ENCODE measurements at regions of chr12 and their contacts with region 1.

Region 1: DNA sequence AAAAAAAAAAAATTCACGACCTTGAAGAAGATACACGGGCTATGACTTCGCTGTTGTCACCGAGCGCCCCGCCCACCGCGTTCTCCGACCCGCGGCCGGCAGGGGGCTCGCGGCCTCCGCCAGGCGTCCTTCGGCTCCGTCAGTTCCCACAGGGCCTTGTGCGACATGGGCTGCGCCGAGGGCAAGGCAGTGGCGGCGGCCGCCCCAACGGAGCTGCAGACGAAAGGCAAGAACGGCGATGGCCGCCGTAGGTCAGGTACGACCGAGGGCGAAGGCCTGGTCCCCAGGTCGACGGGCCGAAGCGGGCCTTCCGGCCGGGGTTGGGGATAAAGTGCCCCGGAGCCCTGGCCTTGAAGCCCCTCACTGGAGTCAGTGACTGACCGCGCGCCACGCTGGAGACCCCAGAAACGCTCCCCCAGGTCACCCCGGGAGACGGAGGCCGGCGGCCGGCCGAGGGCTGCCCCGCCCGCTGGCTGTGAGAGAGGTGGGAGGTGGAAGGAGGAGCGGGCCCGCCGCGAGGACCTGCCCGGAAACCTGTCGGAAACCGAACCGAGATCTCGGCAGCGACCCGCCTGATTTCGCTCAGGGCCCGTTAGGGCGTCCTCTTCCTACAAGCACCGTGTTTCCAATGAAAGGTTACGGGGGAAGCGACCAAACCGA is at the start of gene TXNRD1:
- DNase-seq: peak; percentile 91 to 95
- ATAC-seq: peak; percentile 93
- H3K4me3 ChIP-seq: peak within 1 kb of the TSS; percentile 52 to 65
- H3K27ac ChIP-seq: peak within 1 kb of the TSS; percentile 34 to 79
- H3K4me1 ChIP-seq: no peaks in the 10 kb centered on the region
- H3K27me3 ChIP-seq: no peaks in the 10 kb centered on the region
- total RNA-seq, gene TXNRD1: 115 to 140 TPM

Region 2: DNA sequence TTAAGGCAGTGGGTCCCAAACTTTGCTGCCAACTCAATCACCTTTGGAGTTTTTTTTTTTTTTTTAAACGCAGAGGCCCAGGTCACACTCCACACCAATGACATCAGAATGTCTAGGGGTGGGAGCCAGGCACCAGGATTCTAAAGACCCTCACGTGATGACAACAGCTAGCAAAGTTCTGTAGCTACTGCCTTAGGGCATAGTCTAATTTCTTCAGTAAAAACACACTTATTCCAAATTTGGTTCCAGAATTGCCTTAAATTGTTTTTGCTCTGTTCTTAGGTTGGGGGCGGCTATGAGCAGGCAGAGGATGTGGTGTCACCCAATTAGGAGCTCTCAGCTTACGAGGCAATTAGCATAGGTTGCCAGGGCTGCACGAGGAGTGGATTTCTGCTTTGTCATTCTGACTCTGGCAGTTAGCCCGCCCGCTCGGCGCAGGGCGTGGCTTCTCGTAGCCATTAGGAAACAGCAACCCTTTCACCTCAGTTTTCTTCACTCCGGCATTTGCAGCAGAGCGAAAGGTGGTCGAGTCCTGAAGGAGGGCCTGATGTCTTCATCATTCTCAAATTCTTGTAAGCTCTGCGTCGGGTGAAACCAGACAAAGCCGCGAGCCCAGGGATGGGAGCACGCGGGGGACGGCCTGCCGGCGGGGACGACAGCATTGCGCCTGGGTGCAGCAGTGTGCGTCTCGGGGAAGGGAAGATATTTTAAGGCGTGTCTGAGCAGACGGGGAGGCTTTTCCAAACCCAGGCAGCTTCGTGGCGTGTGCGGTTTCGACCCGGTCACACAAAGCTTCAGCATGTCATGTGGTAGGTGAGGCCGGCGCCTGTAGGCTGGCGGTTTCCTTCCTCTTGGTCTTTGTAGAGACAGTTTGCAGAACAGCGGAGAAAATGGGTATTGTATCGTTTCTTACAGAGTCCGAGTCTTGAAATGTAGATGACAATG is 71.0 kb after region 1 on chr12:
- intact Hi-C with region 1: loop called (anchors 2 kb)
- DNase-seq: peak; percentile 94 to 95
- ATAC-seq: peak; percentile 94
- H3K4me3 ChIP-seq: peak overlapping the region; percentile 94 to 99
- H3K27ac ChIP-seq: peak overlapping the region; percentile 80 to 96
- H3K4me1 ChIP-seq: peaks cover 0 to 2% of the 10 kb centered on the region in 2 donors
- H3K27me3 ChIP-seq: no peaks in the 10 kb centered on the region

Region 3: DNA sequence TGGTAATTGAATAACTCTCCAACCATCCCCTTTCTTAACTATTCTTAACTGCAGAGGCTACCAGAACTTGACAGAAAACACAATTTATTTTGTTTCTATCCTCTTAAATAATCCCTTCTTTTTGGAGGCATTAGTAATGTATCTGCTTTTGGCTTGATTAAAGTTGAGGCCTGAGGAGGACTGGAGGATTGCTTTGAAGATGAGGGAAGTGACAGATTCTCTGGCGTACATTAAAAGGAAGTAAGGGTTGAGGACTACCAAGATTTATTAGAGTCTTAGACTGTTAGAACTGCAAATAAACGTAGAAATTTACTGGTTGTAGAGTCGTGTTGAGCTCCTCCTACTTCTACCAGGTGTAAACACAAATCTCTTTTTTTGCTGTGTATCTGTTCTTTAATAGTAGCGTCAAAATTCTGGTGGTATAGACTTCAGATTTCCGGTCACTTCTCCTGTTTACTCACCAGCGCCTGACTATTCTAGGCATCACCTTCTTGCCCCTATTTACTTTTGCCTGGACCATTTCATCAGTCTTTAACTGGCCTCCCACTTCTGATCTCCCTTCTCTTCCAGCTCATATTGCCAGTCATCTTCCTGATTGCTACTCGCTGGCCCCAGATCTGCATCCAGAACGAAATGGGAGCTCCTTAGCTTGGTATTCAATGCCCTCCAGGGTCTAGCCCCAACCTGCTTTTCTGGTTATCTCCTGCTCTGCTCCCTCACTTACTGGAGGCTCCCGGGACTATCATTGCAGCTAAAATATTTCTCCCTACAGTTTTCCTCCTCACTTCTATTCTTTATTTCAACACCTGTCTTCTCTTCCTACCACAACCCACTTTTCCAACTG is 79.3 kb after region 1 on chr12:
- intact Hi-C with region 1: loop called in 1 of 2 experiments (anchors 2 kb)
- DNase-seq: no peak
- ATAC-seq: no peak
- H3K4me3 ChIP-seq: peak overlapping the region in 1 of 2 donors; percentile 34
- H3K27ac ChIP-seq: peak overlapping the region; percentile 57 to 89
- H3K4me1 ChIP-seq: peaks cover 6 to 15% of the 10 kb centered on the region in 2 donors
- H3K27me3 ChIP-seq: no peaks in the 10 kb centered on the region

Region 4: GRCh38 chr12:104358347-104359003 is 142.7 kb after region 1 on chr12:
- intact Hi-C with region 1: loop called in 1 of 2 experiments (anchors 5 kb)
- DNase-seq: peak in 1 of 2 donors; percentile 81
- ATAC-seq: peak; percentile 88
- H3K4me3 ChIP-seq: no peak overlapping the region
- H3K27ac ChIP-seq: no peak overlapping the region
- H3K4me1 ChIP-seq: peaks cover 0 to 3% of the 10 kb centered on the region in 2 donors
- H3K27me3 ChIP-seq: no peaks in the 10 kb centered on the region

Region 5: GRCh38 chr12:104596134-104596799 is 380.5 kb after region 1 on chr12:
- intact Hi-C with region 1: no loop called
- DNase-seq: peak in 1 of 2 donors; percentile 60
- ATAC-seq: peak; percentile 74
- H3K4me3 ChIP-seq: no peak overlapping the region
- H3K27ac ChIP-seq: peak overlapping the region in 1 of 2 donors; percentile 8
- H3K4me1 ChIP-seq: no peaks in the 10 kb centered on the region
- H3K27me3 ChIP-seq: no peaks in the 10 kb centered on the region

Region 6: GRCh38 chr12:104865080-104865479 is 649.3 kb after region 1 on chr12:
- intact Hi-C with region 1: loop called in 1 of 2 experiments (anchors 10 kb)
- DNase-seq: no peak
- ATAC-seq: no peak
- H3K4me3 ChIP-seq: no peak overlapping the region
- H3K27ac ChIP-seq: peak overlapping the region; percentile 28 to 79
- H3K4me1 ChIP-seq: peaks cover 6 to 10% of the 10 kb centered on the region in 2 donors
- H3K27me3 ChIP-seq: no peaks in the 10 kb centered on the region